ENCODE measurements at regions of chr10 and their contacts with region 1.

Region 1: DNA sequence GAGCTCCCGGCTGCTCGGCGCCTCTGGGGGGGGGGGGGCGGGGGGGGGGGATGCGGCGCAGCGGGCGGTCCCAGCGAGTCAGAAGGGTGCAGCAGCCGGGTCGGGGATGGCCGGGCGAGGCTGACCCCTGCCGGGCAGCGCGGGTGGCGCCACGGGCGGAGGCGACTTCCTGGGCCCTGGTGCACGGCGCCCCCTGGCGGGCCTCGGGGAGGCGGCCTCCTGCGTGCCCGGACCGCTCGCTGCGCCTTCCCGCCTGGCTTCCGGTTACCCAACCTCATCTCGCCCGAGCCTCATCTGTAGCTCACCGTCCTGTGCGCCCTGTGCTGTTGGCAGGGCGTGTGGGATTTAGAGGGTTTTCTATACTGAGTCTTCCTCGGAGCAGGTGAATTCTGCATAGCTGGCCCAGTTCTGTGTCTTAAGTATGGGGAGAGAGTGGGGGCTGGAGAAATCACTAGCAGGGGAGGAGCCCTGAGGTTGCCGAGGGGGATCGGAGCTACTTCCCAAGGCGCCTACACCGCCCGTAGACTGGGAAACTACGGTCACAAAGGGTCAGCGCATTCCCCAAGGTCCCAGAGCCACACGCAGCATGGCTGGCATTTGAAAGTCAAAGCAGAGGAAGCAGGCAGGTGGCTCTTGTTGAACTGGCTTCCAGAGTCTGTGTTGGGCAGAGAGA is 28.3 kb upstream of the WDFY4 start:
- DNase-seq: peak; percentile 76 to 94
- ATAC-seq: peak; percentile 93

Region 2: GRCh38 chr10:48363617-48364355 is 292.6 kb before region 1 on chr10:
- intact Hi-C with region 1: loop called in 1 of 2 experiments (anchors 2 kb)
- DNase-seq: peak in 1 of 2 donors; percentile 15
- ATAC-seq: peak; percentile 78

Region 3: GRCh38 chr10:48551861-48552591 is 104.4 kb before region 1 on chr10:
- intact Hi-C with region 1: loop called (anchors 5 to 10 kb)
- DNase-seq: peak in 1 of 2 donors; percentile 29
- ATAC-seq: peak; percentile 44

Region 4: DNA sequence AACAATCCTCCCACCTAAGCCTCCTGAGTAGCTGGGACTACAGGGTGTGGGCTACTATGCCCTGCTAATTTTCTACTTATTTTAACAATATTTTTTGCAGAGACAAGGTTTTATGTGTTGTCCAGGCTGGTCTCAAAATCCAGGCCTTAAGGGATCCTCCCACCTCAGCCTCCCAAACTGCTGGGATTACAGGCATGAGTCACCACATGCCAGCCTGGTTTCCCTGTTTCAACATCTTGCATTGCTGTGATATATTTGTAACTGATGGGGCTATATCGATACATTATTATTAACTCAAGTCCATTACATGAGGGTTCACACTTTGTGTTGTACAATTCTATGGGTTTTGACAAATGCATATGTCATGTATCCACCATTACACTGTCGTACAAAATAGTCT is 1147.6 kb after region 1 on chr10:
- intact Hi-C with region 1: no loop called
- DNase-seq: no peak
- ATAC-seq: no peak

Measured in left colon (tissue), 2 donors.